Right ventricle myocardium inferior (tissue), 1 donor: ENCODE measurements at regions of chr12 and their contacts with region 1.

Region 1: GRCh38 chr12:5442251-5443006 is 10.5 kb downstream of the NTF3 start:
- DNase-seq: no peak
- ATAC-seq: peak; percentile 84

Region 2: GRCh38 chr12:4857472-4858291 is 584.7 kb before region 1 on chr12:
- intact Hi-C with region 1: loop called (anchors 5 kb)
- DNase-seq: no peak
- ATAC-seq: peak; percentile 82

Region 3: GRCh38 chr12:5022465-5023061 is 419.9 kb before region 1 on chr12:
- intact Hi-C with region 1: loop called (anchors 10 kb)
- DNase-seq: peak; percentile 70
- ATAC-seq: peak; percentile 46

Region 4: DNA sequence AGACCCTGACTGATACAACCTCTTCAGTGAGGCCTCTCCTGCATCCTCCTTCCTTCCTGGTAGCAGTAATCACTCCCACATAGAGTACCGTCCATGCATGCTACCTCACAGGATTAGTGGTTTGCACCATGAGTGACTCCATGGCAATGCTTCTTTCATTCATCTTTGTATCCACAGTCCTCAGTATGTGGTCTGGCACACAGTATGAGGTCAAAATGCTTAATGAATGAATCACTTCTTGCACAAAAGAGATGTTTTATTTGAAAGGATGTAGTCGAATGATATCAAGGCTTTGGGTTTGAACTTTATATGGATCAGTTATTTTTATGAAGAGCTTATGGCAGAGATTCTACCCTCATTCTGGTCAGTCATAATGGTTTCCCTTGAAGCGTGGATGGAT is 356.5 kb before region 1 on chr12:
- intact Hi-C with region 1: no loop called
- DNase-seq: no peak
- ATAC-seq: no peak

Region 5: DNA sequence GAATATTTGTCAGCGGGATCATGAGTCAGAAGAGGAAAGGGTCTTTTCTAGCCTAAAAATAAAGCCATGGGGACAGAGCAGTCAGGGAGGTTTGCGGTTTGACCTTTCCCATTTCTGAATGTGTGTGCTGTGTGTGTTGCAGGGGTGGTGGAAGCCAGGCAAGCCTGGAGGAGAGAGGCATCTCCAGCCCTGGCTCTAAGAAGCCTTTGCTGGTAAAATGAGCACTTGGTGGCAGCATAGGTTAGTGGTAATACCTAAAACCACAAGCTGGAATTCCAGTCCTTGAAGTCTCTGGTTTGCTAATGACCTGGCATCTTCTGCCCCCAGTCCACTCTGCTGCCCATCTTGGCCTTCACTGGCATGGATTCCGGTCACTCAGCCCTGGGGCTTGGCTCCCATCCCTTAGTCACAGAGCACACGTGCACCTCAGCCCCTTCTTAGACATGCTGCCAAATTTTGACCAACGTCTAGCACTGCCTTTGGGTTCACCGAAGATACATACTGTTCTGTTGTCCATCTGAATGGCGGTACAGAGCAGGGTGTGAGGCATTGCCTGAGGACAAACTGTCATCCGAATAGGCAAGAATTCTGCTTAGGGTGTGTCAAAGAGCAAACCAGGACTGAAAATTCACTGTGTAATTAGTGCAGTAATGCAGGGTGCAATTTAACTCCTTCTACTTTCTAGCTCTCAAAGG is 346.0 kb before region 1 on chr12:
- intact Hi-C with region 1: loop called (anchors 2 kb)
- DNase-seq: no peak
- ATAC-seq: no peak

Region 6: DNA sequence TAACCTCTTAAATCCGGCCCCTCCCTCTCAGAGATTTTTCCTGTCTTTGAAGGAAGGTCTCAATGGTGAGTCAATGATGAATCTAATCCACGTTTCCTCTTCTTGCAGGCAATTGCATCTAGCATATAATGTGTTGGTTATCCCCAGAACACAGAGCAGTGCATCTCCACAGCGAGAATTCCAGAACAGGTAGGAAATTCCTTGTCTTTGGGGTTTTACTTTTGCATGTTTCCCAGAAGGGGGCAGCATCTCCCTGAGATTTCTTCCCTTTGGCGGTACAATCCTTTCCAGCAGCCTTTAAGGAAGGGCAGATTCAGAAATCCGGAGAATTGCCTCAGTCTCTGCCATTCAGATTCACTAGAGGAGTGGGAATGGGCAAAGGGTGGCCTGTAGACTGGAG is 270.7 kb before region 1 on chr12:
- intact Hi-C with region 1: loop called (anchors 1 kb)
- DNase-seq: no peak
- ATAC-seq: peak; percentile 41

Region 7: DNA sequence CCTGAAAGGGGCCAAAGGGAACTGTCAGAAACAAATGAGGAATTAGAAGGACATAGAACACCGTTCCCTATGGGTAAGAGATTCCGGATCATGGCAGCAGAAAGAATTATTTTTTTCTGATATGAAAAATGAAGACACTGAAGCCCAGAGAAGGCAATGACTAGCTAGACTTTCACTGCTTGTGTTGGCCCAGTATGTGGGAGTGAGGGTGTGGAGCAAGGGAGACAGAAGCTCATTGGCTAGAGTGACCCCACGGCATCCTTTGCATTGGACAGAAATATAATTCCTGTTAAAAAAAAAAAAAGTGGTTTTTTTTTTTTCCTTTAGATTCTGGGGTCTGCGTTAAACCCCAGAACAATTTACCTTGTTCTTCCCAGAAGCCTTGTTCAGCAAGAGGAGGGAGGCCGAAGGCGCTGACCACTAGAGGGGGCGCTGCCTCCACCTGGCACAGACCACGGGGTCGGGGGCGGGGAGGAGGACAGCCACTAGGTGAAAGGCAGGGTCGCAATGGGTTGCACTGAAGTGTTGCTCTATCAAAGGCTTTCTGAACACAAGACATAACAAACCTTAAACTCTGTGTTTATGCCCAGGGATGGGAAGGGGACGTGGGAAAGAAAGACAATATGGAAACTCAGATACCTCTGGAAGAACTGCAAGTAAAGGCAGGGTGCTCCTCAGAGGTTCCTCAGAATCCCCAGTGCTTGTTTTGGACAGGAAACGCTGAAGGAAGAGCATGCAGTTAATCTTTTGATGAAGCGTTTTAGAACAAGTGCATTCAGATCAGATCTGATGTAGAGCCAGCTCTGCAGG is 241.9 kb before region 1 on chr12:
- intact Hi-C with region 1: loop called (anchors 1 kb)
- DNase-seq: no peak
- ATAC-seq: peak; percentile 67

Region 8: DNA sequence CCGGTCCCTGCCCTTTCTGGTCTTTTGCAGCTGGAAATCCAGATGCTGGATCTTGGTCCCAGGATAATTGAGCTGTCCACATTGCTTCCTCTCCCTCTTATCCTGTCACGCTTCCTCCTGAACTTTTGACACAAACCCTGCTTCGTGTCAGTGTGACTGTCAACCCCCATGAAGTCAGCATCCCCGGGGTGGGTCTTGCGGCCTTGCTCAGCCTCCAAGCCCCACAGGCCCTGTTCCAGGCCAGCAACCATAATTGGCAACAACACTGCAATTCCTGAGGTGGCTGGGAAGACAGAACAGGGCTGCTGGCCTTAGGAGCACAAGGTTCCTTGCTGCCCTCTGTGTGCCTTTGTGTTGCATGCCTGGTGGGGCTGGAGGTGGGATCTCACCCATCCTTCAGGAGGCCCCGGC is 64.4 kb after region 1 on chr12:
- intact Hi-C with region 1: loop called (anchors 5 kb)
- DNase-seq: no peak
- ATAC-seq: peak; percentile 85

Region 9: GRCh38 chr12:6047249-6048237 is 605.1 kb after region 1 on chr12:
- intact Hi-C with region 1: no loop called
- DNase-seq: no peak
- ATAC-seq: no peak